Ovary (tissue), 10 donors: ENCODE measurements at regions of chr4 and their contacts with region 1.

Region 1: GRCh38 chr4:39044364-39044955 is 12.3 kb upstream of the TMEM156 start:
- DNase-seq: peak; percentile 91 to 95 (median 93)
- H3K4me3 ChIP-seq: peak overlapping the region; percentile 73
- H3K27ac ChIP-seq: peak overlapping the region; percentile 71 to 93
- H3K4me1 ChIP-seq: peaks cover 5% of the 10 kb centered on the region
- H3K27me3 ChIP-seq: no peaks in the 10 kb centered on the region
- CTCF ChIP-seq: no peak
- EP300 ChIP-seq: no peak
- POLR2A ChIP-seq: no peak

Region 2: DNA sequence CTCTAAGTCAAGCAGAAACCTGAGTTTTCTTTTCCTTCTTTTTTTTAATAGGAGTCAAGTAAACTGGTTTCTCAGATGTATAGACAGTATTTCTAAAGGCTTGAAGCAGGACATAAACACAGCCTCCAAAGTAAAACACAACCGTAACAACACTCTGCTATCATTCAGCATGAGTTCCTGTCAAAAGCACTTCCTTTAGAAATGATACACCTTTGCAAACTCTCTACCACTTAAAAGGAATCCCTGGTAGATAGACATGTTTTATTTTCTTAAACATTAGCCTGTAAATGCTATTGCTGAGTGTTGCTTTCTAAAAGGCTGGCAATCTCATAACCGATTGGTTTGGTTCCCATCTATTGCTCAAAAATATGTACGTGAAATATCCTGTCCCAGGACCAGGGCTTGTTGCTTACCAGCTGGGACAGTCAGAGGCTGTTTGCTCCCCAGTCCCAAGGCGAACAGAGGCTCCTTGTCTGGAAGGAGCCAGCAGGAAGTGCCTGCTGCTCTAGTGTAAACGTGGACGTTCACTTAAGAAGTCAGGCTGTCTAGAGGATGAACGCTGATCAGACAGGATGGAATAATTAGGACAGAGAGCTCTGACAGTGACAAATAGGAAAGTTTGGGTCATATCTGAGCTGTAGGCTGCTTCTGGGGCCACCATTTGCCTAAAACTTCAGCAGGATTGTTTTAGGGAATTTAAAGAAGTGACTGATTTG is 554.4 kb before region 1 on chr4:
- intact Hi-C with region 1: no loop called
- DNase-seq: no peak
- H3K4me3 ChIP-seq: no peak overlapping the region
- H3K27ac ChIP-seq: no peak overlapping the region
- H3K4me1 ChIP-seq: peaks cover 2% of the 10 kb centered on the region
- H3K27me3 ChIP-seq: no peaks in the 10 kb centered on the region
- CTCF ChIP-seq: no peak
- EP300 ChIP-seq: no peak
- POLR2A ChIP-seq: no peak

Region 3: DNA sequence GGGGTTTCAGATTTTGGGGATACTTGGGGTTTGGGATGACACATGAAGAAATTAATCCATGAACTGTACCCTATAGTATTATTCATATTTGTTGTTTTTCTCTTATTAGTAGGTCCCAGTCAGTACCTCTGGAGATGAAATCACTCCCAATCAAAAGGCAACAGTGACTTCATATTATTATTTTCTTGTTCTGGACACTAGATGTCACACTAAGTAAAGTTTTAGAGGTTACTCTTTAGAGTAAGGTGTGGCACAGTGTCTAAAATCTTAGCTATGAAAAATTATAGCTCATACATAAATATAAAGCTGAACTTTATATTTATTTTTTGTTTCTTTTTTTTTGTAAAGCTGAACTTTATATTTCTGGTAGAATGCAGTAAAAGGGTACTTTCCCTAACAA is 141.8 kb before region 1 on chr4:
- intact Hi-C with region 1: loop called in 1 of 4 experiments (anchors 10 kb)
- DNase-seq: no peak
- H3K4me3 ChIP-seq: no peak overlapping the region
- H3K27ac ChIP-seq: no peak overlapping the region
- H3K4me1 ChIP-seq: peaks cover 19% of the 10 kb centered on the region
- H3K27me3 ChIP-seq: no peaks in the 10 kb centered on the region
- CTCF ChIP-seq: no peak
- EP300 ChIP-seq: no peak
- POLR2A ChIP-seq: no peak

Region 4: GRCh38 chr4:39181905-39182638 is 137.6 kb after region 1 on chr4 and contains the start of gene WDR19:
- intact Hi-C with region 1: loop called in 1 of 4 experiments (anchors 10 kb)
- DNase-seq: peak; percentile 98 to 99 (median 98)
- H3K4me3 ChIP-seq: peak within 1 kb of the TSS; percentile 73
- H3K27ac ChIP-seq: peak within 1 kb of the TSS in 1 of 2 donors; percentile 59
- H3K4me1 ChIP-seq: peaks cover 2% of the 10 kb centered on the region
- H3K27me3 ChIP-seq: no peaks in the 10 kb centered on the region
- CTCF ChIP-seq: peak; percentile 17 to 58 (median 53)
- EP300 ChIP-seq: no peak
- POLR2A ChIP-seq: peak; percentile 35
- total RNA-seq, gene WDR19: 35.4 to 71.0 (median 64.1) TPM

Region 5: GRCh38 chr4:39237179-39237578 is 192.7 kb after region 1 on chr4:
- intact Hi-C with region 1: no loop called
- DNase-seq: no peak
- H3K4me3 ChIP-seq: no peak overlapping the region
- H3K27ac ChIP-seq: no peak overlapping the region
- H3K4me1 ChIP-seq: no peaks in the 10 kb centered on the region
- H3K27me3 ChIP-seq: no peaks in the 10 kb centered on the region
- CTCF ChIP-seq: no peak
- EP300 ChIP-seq: no peak
- POLR2A ChIP-seq: no peak